Ascending aorta (tissue), 2 donors: ENCODE measurements at regions of chr19 and their contacts with region 1.

Region 1: DNA sequence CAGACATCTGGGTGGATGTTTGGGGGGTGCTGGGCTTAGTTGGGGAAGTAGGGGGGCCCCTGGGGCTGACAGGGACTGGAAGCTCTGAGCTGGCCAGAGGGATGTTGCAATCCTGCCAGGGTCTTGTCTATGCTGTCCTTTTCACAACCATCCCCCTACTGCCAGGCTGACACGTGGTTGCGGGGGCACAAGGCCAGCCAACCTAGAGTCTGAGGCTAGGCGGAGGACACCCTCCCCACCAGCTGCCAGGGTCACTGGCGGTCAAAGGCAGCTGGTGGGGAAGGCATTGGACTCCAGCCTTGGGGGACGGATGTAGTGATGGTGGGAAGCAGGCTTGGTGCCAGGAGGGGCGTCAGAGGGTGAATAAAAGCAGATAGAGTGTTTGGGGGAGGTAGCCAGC is 1.6 kb upstream of the APOC1 start:
- DNase-seq: peak in 1 of 2 donors; percentile 26
- H3K4me3 ChIP-seq: no peak overlapping the region
- H3K27ac ChIP-seq: no peak overlapping the region
- H3K4me1 ChIP-seq: no peaks in the 10 kb centered on the region
- H3K27me3 ChIP-seq: no peaks in the 10 kb centered on the region
- CTCF ChIP-seq: no peak

Region 2: DNA sequence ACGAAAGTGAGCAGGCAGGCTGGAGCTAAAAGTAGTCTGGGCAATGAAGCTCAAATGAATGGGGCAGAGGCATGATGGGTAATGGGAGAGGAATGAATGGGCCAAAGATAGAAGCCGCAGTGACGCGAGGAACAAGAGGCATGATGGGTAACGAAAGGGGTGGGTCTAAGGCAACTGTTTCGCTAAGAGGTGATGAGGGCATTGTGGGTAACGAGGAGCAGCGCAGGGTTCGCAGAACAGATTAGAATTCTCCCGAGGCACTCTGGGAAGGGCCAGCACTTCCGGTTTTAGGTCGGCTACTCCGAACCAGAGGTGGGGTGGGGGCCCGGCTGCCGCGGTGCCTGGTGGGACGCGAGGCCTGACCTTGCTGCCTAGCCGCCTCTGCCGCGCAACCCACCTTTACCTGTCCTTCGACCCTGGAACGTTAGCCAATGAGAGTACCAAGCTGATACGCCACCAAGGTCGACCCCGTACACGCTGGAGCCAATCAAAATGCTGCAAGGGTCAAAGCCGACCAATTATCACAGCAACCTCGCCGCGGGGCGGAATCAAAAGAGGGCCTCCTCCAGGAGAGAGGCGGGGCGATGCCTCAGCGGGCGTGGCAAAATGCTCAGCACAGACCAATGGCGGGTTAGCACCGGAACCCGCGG is 22.4 kb before region 1 on chr19:
- intact Hi-C with region 1: loop called (anchors 1 kb)
- DNase-seq: peak; percentile 100
- H3K4me3 ChIP-seq: peak overlapping the region; percentile 65 to 72
- H3K27ac ChIP-seq: peak overlapping the region; percentile 92 to 97
- H3K4me1 ChIP-seq: peaks cover 12 to 19% of the 10 kb centered on the region in 2 donors
- H3K27me3 ChIP-seq: no peaks in the 10 kb centered on the region
- CTCF ChIP-seq: no peak

Region 3: GRCh38 chr19:44948763-44949374 is 36.0 kb after region 1 on chr19:
- intact Hi-C with region 1: no loop called
- DNase-seq: no peak
- H3K4me3 ChIP-seq: no peak overlapping the region
- H3K27ac ChIP-seq: no peak overlapping the region
- H3K4me1 ChIP-seq: peaks cover 5 to 12% of the 10 kb centered on the region in 2 donors
- H3K27me3 ChIP-seq: no peaks in the 10 kb centered on the region
- CTCF ChIP-seq: no peak

Region 4: DNA sequence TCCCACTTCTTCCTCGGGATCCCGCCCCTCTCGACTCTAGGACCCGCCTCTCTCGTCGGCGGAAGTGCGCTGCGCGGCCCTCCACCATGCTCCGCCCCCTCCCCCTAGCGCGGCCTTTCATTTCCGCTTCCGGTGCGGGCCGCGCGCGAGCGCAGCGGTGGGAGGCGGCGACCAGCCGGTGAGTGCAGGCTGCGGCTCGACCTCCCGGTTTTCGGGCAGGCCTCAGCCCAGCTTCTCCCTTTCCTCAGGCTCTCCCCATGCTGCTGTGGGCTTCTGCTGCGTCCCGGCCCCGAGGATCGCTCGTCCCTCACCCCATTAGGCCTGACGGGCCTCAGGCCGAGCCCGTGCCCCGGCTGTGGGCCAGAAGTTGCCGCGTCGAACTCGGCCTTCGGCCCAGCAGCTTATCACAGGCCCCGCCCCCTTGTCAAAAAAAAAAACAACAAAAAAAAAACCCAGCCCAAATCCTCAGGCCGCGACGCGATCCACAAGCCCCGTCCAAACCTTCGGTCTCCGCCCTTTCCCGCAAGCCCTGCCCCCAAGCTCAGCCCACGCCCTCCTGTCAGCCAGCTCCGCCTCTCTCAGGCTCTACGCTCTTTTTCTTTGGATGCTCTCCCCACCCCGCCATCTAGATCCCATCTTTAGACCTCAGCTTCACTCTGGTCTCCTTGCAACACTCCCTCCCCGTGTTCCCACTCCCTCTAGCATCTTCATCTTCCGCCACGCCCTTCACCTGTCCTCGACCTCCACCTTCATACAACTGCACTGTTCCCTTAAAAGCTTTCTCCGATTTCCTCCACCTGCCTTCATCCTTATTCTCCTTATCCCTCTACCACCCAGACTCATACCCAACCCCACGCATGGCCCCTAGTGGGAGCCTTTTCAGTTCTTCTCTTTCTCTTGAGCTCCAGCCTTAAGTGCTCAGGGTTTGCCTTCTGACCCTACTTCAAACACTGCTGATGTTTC is 126.4 kb after region 1 on chr19 and contains the start of gene CLASRP:
- intact Hi-C with region 1: loop called (anchors 5 kb)
- DNase-seq: peak; percentile 65 to 94
- H3K4me3 ChIP-seq: peak within 1 kb of the TSS; percentile 83 to 86
- H3K27ac ChIP-seq: peak within 1 kb of the TSS; percentile 91 to 96
- H3K4me1 ChIP-seq: peaks cover 5 to 22% of the 10 kb centered on the region in 2 donors
- H3K27me3 ChIP-seq: no peaks in the 10 kb centered on the region
- CTCF ChIP-seq: no peak
- total RNA-seq, gene CLASRP: 103 TPM

Region 5: GRCh38 chr19:45439569-45440254 is 526.9 kb after region 1 on chr19:
- intact Hi-C with region 1: no loop called
- DNase-seq: peak; percentile 52 to 95
- H3K4me3 ChIP-seq: peak overlapping the region; percentile 50 to 87
- H3K27ac ChIP-seq: peak overlapping the region; percentile 97 to 99
- H3K4me1 ChIP-seq: peaks cover 5 to 22% of the 10 kb centered on the region in 2 donors
- H3K27me3 ChIP-seq: no peaks in the 10 kb centered on the region
- CTCF ChIP-seq: peak; percentile 99 to 100 (median 99)